ENCODE measurements at regions of chr20 and their contacts with region 1.

Region 1: GRCh38 chr20:39049684-39050554 is 87.8 kb downstream of the DHX35 start:
- DNase-seq: peak; percentile 62 to 89 (median 78)
- ATAC-seq: peak; percentile 89
- H3K4me3 ChIP-seq: peak overlapping the region; percentile 76
- H3K4me3 Mint-ChIP-seq: peak overlapping the region; percentile 79 to 96 (median 89)
- H3K27ac ChIP-seq: peak overlapping the region; percentile 32
- H3K27ac Mint-ChIP-seq: peak overlapping the region; percentile 60 to 84 (median 79)
- H3K4me1 ChIP-seq: peaks cover 9% of the 10 kb centered on the region in 2 donors
- H3K4me1 Mint-ChIP-seq: peaks cover 0 to 12% (median 7%) of the 10 kb centered on the region in 7 donors
- H3K27me3 ChIP-seq: no peaks in the 10 kb centered on the region
- H3K27me3 Mint-ChIP-seq: peaks cover 0 to 16% (median 0%) of the 10 kb centered on the region in 5 donors

Region 2: GRCh38 chr20:38645980-38646858 is 403.7 kb before region 1 on chr20:
- CTCF ChIA-PET with region 1: no interaction called
- POLR2A ChIA-PET with region 1: interaction called, 3 read pairs
- intact Hi-C with region 1: loop called (anchors 1 kb)
- DNase-seq: peak; percentile 80 to 97 (median 90)
- ATAC-seq: peak; percentile 99
- H3K4me3 ChIP-seq: peak overlapping the region; percentile 46
- H3K4me3 Mint-ChIP-seq: peak overlapping the region; percentile 74 to 91 (median 84)
- H3K27ac ChIP-seq: no peak overlapping the region
- H3K27ac Mint-ChIP-seq: peak overlapping the region in 3 of 9 donors; percentile 10 to 46 (median 31)
- H3K4me1 ChIP-seq: peaks cover 7 to 8% of the 10 kb centered on the region in 2 donors
- H3K4me1 Mint-ChIP-seq: peaks cover 0 to 8% (median 8%) of the 10 kb centered on the region in 7 donors
- H3K27me3 ChIP-seq: no peaks in the 10 kb centered on the region
- H3K27me3 Mint-ChIP-seq: peaks cover 24 to 49% (median 34%) of the 10 kb centered on the region in 5 donors

Region 3: GRCh38 chr20:38920851-38921250 is 129.1 kb before region 1 on chr20:
- CTCF ChIA-PET with region 1: interaction called, 10 read pairs
- POLR2A ChIA-PET with region 1: no interaction called
- intact Hi-C with region 1: loop called (anchors 1 kb)
- DNase-seq: no peak
- ATAC-seq: no peak
- H3K4me3 ChIP-seq: no peak overlapping the region
- H3K4me3 Mint-ChIP-seq: no peak overlapping the region
- H3K27ac ChIP-seq: no peak overlapping the region
- H3K27ac Mint-ChIP-seq: no peak overlapping the region
- H3K4me1 ChIP-seq: peaks cover 0 to 3% of the 10 kb centered on the region in 2 donors
- H3K4me1 Mint-ChIP-seq: peaks cover 0 to 9% (median 4%) of the 10 kb centered on the region in 7 donors
- H3K27me3 ChIP-seq: no peaks in the 10 kb centered on the region
- H3K27me3 Mint-ChIP-seq: no peaks in the 10 kb centered on the region

Region 4: DNA sequence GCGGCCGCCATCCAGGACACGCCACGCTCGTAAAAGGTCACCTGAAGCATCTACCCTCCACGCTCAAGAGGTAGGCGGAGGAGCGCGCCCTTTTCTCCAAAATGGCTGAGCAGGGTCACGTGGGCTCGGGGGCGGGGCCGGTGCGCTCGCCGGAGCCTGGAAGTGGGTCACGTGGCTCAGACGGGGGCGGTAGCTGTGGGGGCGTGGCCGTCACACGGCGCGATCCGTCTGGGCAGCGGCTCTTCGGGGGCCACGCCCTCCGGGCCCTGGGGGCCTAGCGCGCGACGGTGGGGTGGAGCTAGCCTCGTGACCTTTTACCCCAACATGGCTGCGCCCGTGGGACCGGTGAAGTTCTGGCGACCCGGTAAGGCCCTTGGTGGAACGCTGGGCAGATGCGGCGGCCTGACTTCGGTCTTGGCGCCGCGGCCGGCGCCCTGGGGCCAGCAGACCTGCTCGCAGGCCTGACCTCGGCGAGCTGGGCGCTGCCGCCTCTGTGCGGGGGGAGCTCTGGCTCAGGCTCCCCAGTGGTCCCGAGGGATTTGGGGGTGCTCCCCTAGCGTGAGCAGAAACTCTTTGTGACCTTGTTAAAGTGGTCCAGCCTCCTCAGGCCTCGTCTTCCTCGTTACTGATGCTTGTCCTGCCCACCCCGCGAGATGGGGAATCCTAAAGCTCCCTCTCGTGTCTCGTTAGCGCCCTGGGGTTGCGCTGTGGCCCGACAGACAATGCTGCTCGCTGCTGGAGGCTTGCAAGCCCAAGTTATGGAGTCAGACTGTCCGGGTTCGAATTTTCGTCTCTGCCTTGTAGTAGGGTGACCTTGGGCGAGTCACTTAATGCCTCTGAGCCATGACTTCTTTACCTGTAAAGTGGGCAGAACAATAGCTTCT is 87.6 kb before region 1 on chr20 and contains the start of gene DHX35:
- CTCF ChIA-PET with region 1: no interaction called
- POLR2A ChIA-PET with region 1: no interaction called
- intact Hi-C with region 1: loop called (anchors 1 kb)
- DNase-seq: peak; percentile 96 to 99 (median 98)
- ATAC-seq: peak; percentile 100
- H3K4me3 ChIP-seq: peak within 1 kb of the TSS; percentile 97
- H3K4me3 Mint-ChIP-seq: peak within 1 kb of the TSS; percentile 92 to 97 (median 96)
- H3K27ac ChIP-seq: peak within 1 kb of the TSS; percentile 80
- H3K27ac Mint-ChIP-seq: peak within 1 kb of the TSS; percentile 92 to 98 (median 96)
- H3K4me1 ChIP-seq: peaks cover 6 to 16% of the 10 kb centered on the region in 2 donors
- H3K4me1 Mint-ChIP-seq: peaks cover 16 to 46% (median 34%) of the 10 kb centered on the region in 7 donors
- H3K27me3 ChIP-seq: no peaks in the 10 kb centered on the region
- H3K27me3 Mint-ChIP-seq: no peaks in the 10 kb centered on the region
- total RNA-seq, gene DHX35: 8.0 to 13.3 (median 10.6) TPM

Region 5: DNA sequence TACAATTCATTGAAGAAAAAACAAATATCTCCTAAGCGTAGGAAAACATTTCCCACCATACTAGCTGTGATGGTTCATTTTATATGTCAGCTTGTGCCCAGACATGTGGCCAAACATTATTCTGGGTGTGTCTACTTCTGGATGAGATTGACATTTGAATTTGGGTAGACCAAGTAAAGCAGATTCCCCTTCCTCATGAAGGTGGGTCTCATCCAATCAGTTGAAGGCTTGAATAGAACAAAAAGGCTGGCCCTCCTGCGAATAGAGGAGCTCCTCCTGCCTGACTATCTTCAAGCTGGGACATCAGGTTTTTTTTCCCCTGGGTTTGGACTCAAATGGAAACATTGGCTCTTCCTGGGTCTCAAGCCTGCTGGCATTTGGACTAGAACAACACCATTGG is 25.8 kb after region 1 on chr20:
- CTCF ChIA-PET with region 1: interaction called, 100 read pairs
- POLR2A ChIA-PET with region 1: no interaction called
- intact Hi-C with region 1: no loop called
- DNase-seq: no peak
- ATAC-seq: no peak
- H3K4me3 ChIP-seq: no peak overlapping the region
- H3K4me3 Mint-ChIP-seq: no peak overlapping the region
- H3K27ac ChIP-seq: no peak overlapping the region
- H3K27ac Mint-ChIP-seq: no peak overlapping the region
- H3K4me1 ChIP-seq: no peaks in the 10 kb centered on the region
- H3K4me1 Mint-ChIP-seq: peaks cover 0 to 7% (median 0%) of the 10 kb centered on the region in 7 donors
- H3K27me3 ChIP-seq: no peaks in the 10 kb centered on the region
- H3K27me3 Mint-ChIP-seq: peaks cover 22 to 45% (median 35%) of the 10 kb centered on the region in 5 donors

Region 6: GRCh38 chr20:39164642-39165041 is 114.7 kb after region 1 on chr20:
- CTCF ChIA-PET with region 1: no interaction called
- POLR2A ChIA-PET with region 1: no interaction called
- intact Hi-C with region 1: no loop called
- DNase-seq: no peak
- ATAC-seq: no peak
- H3K4me3 ChIP-seq: no peak overlapping the region
- H3K4me3 Mint-ChIP-seq: no peak overlapping the region
- H3K27ac ChIP-seq: no peak overlapping the region
- H3K27ac Mint-ChIP-seq: no peak overlapping the region
- H3K4me1 ChIP-seq: no peaks in the 10 kb centered on the region
- H3K4me1 Mint-ChIP-seq: no peaks in the 10 kb centered on the region
- H3K27me3 ChIP-seq: no peaks in the 10 kb centered on the region
- H3K27me3 Mint-ChIP-seq: peaks cover 7 to 31% (median 16%) of the 10 kb centered on the region in 5 donors

Region 7: GRCh38 chr20:40962730-40963504 is 1913.0 kb after region 1 on chr20:
- CTCF ChIA-PET with region 1: interaction called, 3 read pairs
- POLR2A ChIA-PET with region 1: no interaction called
- intact Hi-C with region 1: loop called in 1 of 2 experiments (anchors 1 kb)
- DNase-seq: peak; percentile 36 to 76 (median 64)
- ATAC-seq: peak; percentile 90
- H3K4me3 ChIP-seq: no peak overlapping the region
- H3K4me3 Mint-ChIP-seq: no peak overlapping the region
- H3K27ac ChIP-seq: no peak overlapping the region
- H3K27ac Mint-ChIP-seq: no peak overlapping the region
- H3K4me1 ChIP-seq: peaks cover 0 to 15% of the 10 kb centered on the region in 2 donors
- H3K4me1 Mint-ChIP-seq: peaks cover 0 to 11% (median 9%) of the 10 kb centered on the region in 7 donors
- H3K27me3 ChIP-seq: no peaks in the 10 kb centered on the region
- H3K27me3 Mint-ChIP-seq: peaks cover 0 to 5% (median 0%) of the 10 kb centered on the region in 5 donors